Activated naive CD4-positive, alpha-beta T cell treated with anti-CD3 and anti-CD28 coated beads, Interleukin-2, amount 10 ng/mL, durations not matched to agents 7 days and 5 days (primary cell): ENCODE measurements at regions of chr12 and their contacts with region 1.

Region 1: DNA sequence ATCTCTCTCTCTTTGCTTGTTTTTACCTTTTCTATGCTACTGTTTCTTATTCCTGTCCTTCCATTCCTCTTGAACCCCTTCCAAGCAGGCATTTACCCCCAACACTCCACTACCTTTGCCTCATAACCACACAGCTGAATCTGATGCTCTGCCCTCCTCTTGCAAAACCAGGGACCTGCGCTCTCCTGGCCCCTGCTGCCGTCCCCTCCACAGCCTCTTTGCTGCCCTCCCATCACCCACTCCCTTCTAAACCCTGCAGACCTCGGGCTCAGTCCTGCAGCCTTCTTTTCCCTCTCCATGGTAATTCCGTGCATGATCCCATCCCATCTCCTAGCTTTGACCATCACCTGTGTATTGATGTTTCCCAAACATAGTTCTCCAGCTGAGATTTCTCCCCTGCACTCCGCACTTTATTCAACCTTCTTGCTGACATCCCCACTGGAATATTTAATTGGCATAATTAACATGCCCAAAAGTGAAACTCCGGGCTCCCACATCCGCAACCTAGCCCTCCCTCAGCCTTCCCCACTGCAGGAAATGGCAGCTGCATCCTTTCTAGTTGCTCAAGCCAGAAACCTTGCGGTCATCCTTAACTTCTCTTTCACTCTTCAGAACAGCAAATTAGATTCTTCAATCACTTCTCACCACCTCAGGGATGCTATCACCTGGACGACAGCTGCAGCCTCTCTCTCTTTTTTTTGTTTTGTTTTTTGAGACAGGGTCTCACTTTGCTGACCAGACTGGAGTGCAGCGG is 16.0 kb downstream of the FIGNL2 start:
- DNase-seq: peak; percentile 35
- H3K4me3 Mint-ChIP-seq: no peak overlapping the region
- H3K27ac Mint-ChIP-seq: no peak overlapping the region
- H3K4me1 Mint-ChIP-seq: peaks cover 33% of the 10 kb centered on the region
- H3K27me3 Mint-ChIP-seq: peaks cover 88% of the 10 kb centered on the region

Region 2: DNA sequence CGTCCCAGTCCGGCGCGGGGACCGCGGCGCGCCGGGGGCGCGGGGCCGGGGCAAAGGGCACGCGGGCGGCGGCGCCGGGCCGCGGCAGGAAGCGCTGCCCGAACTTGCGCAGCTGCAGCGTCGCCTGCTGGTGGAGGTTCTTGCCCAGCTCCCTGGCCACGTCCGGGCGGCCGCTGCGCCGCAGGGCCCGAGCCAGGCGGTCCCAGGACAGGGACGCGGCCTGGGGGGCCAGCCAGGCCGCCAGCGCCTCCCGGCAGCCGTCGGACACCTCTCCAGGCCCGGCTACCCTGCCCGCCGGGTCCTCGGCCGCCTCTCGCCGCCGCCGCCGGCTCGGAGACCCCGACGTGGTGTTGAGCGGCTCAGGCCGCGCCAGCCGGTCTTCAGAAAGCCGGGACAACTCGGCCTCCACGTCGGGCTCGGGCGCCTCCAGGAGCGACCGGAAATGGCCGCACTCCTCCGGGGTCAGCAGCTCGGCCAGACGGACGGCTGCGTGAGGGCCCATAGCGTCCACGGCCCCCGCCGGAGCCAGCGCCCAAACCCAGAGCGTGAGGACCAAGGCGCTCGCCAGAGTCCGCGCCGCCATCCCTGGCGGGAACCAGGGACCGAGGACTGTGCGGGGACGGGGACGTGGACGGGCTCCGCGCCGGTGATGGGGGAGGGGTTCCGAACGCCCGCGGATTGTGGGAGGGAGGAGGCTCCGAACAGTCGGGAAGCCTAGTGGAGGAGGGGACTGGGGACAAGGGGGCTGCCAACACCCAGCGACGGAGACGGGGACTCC is 18.0 kb before region 1 on chr12:
- CTCF ChIA-PET with region 1: interaction called, 12 read pairs
- DNase-seq: peak; percentile 77
- H3K4me3 Mint-ChIP-seq: peak overlapping the region; percentile 57
- H3K27ac Mint-ChIP-seq: no peak overlapping the region
- H3K4me1 Mint-ChIP-seq: peaks cover 5% of the 10 kb centered on the region
- H3K27me3 Mint-ChIP-seq: peaks cover 68% of the 10 kb centered on the region

Region 3: DNA sequence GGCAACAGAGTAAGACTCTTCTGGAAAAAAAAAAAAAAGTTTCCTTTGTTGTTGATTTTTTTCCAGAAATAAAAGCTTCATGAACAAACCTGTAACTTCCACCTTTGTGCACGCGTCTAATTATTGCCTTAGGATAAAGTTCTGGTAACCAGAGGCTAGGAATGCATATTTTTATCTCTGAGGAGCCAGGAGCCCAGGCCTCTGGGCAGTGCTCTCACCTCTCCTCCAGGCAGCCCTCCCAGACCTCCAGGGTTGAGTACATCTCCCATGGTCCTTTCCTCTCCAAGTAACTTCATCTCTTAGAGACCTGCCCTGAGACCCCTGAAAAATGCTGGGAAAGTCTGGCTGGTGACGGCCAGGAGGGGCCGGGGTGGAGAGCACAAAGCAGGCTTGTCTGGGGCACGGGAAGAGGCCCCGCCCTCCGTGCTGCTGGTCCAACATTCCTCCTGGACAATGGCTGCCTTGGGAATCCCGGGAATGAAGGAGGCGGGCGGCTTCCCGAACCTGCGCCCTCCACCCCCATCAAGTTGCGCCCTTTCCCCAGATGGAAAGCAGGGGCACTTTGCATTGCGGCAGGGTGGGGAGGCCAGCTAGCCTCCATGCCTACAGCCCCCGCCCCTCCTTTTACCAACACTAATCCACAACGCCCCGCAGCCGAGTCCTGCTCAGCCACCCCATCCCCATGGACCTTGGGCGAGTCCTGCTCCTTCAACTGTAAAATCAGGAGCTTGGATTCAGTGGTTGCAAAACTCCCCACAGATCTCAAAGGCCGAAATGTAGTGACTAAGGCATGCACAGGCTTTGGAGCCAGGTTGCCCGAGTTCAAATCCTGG is 23.3 kb after region 1 on chr12:
- CTCF ChIA-PET with region 1: no interaction called
- DNase-seq: no peak
- H3K4me3 Mint-ChIP-seq: no peak overlapping the region
- H3K27ac Mint-ChIP-seq: no peak overlapping the region
- H3K4me1 Mint-ChIP-seq: peaks cover 16% of the 10 kb centered on the region
- H3K27me3 Mint-ChIP-seq: peaks cover 57% of the 10 kb centered on the region